ENCODE measurements at regions of chr19 and their contacts with region 1.

Region 1: DNA sequence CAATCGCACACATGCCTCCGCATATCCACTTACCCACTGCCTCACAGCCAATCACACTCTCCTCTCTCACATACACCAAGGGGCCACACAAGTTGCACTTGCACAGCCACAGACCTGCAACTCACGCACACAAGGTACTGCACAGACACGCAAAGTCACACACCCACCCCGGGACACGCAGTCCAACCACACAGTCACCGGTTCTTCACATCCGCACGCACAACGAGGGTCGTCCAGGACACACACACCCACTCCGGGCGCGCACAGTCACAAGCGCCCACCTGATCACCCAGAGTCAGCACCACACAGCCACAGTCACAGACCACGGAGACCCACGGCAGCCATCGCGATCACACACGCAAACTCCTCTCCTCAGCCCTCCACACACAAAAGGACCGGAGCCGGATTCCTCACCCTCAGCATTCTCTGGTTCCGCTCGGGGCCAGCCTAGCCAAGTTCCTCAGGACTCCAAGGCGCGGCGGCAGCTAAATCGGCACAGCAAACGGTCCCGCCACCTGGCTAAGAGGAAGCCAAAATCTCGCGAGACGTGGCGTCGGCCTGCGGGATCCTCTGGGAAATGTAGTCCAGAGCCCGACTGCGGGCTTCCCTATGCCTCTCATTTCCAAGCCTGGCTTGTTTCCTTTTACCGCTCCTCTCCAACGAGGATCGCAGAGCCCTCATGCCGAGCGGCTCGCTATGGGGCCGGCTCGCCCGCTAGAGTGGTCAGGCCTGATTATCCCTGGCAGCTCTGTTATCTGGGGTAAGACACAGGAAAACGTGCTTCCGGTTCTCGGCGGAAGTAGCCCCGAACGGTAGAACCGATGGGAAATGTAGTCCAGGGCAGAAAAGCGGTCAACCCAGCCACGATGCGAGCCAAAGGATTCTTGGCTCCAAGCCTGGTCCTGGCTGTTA is at the start of gene ZNF850:
- DNase-seq: peak; percentile 97
- H3K4me3 Mint-ChIP-seq: peak within 1 kb of the TSS; percentile 98
- H3K27ac Mint-ChIP-seq: peak within 1 kb of the TSS; percentile 90
- H3K4me1 Mint-ChIP-seq: peaks cover 21% of the 10 kb centered on the region
- H3K27me3 Mint-ChIP-seq: peaks cover 2% of the 10 kb centered on the region
- total RNA-seq, gene ZNF850: 11.2 to 11.3 TPM

Region 2: DNA sequence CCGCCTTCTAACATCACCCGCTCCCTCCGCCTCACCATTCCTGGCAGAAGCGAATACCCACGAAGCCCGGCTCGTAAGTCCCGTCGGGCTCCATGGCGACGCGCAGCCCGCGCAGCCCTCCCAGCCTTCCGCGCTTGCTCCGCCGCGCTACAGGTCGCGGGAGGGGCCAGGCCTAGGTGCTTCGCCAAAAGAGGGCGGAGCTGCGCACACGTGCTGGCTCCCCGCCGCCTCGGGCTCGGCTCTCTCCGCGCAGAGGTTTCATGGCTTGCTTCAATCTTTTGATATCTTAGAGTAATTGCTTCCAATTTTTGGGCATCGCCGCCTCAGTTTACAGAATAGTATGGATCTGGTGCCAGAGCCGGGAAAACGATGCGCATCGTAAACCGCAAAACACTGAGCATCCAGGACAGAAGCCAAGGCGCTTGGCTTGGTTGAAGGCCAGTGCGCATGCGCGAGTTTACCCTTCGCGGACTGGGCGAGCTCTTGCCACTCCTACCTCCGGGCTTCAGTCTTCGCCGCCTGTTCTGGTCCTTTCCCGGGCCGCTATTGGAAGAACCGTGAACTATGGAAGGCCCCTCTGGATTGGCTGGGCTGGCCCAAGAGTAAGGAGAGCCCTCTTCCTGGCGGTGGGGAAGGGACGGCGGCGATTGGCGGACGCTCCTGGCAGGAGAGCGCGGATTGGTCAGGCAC is 657.7 kb before region 1 on chr19 and contains the start of gene POLR2I:
- CTCF ChIA-PET with region 1: no interaction called
- intact Hi-C with region 1: loop called (anchors 10 kb)
- DNase-seq: peak; percentile 99
- H3K4me3 Mint-ChIP-seq: peak within 1 kb of the TSS; percentile 99
- H3K27ac Mint-ChIP-seq: peak within 1 kb of the TSS; percentile 91
- H3K4me1 Mint-ChIP-seq: peaks cover 31% of the 10 kb centered on the region
- H3K27me3 Mint-ChIP-seq: no peaks in the 10 kb centered on the region
- total RNA-seq, gene POLR2I: 86.8 to 87.4 TPM

Region 3: DNA sequence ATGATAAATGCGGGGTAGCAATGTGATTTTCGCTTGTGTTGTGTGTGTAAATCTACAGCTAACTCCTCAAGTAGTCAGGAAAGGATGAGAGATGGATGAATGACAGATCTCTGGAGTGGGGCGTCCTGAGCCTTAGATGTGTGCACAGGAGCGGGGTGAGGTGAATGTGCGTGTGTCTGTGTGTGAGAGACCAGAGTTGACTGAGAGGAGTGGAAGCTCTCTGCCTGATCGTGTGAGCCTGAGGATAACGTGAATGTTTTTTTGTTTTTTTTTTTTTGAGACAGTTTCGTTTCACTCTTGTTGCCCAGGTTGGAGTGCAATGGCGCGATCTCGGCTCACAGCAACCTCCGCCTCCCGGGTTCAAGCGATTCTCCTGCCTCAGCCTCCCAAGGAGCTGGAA is 106.7 kb before region 1 on chr19:
- CTCF ChIA-PET with region 1: no interaction called
- intact Hi-C with region 1: loop called (anchors 5 kb)
- DNase-seq: no peak
- H3K4me3 Mint-ChIP-seq: peak overlapping the region; percentile 91
- H3K27ac Mint-ChIP-seq: no peak overlapping the region
- H3K4me1 Mint-ChIP-seq: peaks cover 20% of the 10 kb centered on the region
- H3K27me3 Mint-ChIP-seq: no peaks in the 10 kb centered on the region

Region 4: DNA sequence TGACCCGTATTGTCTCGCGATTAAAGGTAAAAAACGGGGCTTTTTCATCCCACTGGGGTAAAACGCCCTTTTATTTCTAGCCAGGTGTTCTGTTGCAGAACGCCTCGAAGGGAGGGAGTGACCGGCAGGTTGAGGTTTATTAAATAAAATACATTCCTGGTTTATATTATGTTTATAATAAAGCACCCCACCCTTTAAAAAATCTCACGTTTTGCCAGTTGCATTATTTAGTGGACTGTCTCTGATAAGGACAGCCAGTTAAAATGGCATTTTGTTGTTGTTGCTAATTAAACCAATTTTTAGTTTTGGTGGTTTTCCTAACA is 25.2 kb after region 1 on chr19:
- CTCF ChIA-PET with region 1: no interaction called
- intact Hi-C with region 1: loop called (anchors 1 kb)
- DNase-seq: no peak
- H3K4me3 Mint-ChIP-seq: peak overlapping the region; percentile 84
- H3K27ac Mint-ChIP-seq: peak overlapping the region; percentile 89
- H3K4me1 Mint-ChIP-seq: peaks cover 8% of the 10 kb centered on the region
- H3K27me3 Mint-ChIP-seq: no peaks in the 10 kb centered on the region

Region 5: DNA sequence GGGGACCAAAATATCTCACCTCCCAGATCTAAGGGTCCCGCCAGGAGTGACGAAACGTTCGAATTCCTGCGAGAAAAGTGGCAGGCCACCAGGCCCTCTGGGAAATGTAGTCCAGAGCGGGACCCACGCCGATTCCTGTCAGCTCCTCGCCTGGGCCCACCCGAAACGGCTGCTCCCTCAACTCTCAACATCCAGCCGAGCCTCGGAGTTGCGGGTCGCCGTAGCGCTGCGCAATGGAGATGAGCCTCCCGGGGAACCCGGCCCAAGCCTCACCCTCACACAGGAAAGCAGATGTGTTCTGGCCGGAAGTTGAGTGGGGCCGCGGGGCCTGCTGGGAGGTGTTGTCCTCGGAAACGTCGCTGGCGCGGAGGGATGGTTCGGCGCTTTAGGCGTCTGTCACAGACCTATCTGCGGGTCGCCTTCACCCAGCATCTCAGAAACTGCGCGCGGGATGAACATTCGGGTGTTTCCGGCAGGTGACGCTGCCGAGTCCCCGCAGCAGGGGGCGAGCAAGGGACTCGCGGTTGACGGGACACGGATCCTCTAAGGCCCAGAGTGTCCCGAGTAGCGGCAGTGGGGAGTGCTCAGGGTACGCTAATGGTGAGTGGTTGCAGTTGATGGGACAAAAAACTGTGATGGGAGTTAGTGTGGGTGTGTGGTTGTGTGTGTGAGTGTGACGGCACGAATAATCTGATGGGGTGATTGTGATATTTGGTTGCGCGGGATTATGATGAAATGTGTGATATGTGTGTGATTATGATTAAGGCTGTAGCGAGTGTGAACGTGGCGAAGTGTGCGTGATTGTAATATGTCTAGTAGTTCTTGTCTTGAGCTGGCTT is 143.6 kb after region 1 on chr19 and contains the starts of genes ZNF568 and ZNF829:
- CTCF ChIA-PET with region 1: no interaction called
- intact Hi-C with region 1: loop called (anchors 1 kb)
- DNase-seq: peak; percentile 96
- H3K4me3 Mint-ChIP-seq: peak within 1 kb of the TSS; percentile 87
- H3K27ac Mint-ChIP-seq: peak within 1 kb of the TSS; percentile 91
- H3K4me1 Mint-ChIP-seq: peaks cover 17% of the 10 kb centered on the region
- H3K27me3 Mint-ChIP-seq: no peaks in the 10 kb centered on the region
- total RNA-seq, gene ZNF568: 5.3 to 6.3 TPM
- total RNA-seq, gene ZNF829: 3.5 to 3.7 TPM

Measured in activated naive CD4-positive, alpha-beta T cell treated with anti-CD3 and anti-CD28 coated beads for 36 hours (primary cell).